Activated CD4-positive, alpha-beta memory T cell treated with anti-CD3 and anti-CD28 coated beads, Interleukin-2, amount 10 ng/mL, durations not matched to agents 7 days and 5 days (primary cell): ENCODE measurements at regions of chr10 and their contacts with region 1.

Region 1: DNA sequence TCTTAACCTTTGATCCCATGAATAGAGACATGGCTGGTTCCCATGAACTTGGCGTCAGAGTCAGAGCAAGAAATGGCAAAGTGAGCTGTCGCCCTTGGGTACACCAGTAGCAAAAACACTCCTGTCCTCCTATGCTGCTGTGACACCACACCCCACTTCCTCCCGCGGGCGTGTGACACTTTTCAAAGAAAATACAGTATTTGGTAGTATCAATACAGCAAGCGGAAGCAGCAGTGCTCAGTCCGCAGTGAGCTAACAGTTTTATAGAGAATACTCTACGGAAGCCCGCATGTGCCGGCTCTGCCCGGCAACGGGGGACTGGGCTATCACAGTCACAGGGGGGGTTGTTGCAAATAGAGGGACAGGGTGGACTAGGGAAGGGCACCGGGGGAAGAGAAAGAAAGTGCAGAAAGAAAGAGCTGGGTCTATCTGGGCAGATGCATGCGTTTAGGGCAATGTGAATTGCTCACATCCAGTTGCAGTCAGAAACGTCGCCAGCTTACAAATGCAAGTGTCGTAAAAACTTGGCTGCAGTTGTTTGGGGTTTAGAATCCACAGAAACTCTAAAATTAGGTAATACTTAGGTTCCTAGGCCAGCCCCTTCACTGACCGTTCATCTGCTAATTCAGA is 49.8 kb downstream of the PRKCQ start:
- DNase-seq: peak; percentile 91
- H3K4me3 Mint-ChIP-seq: peak overlapping the region; percentile 78
- H3K27ac Mint-ChIP-seq: peak overlapping the region; percentile 99
- H3K4me1 Mint-ChIP-seq: peaks cover 84% of the 10 kb centered on the region
- H3K27me3 Mint-ChIP-seq: no peaks in the 10 kb centered on the region

Region 2: GRCh38 chr10:6487920-6488319 is 42.4 kb before region 1 on chr10:
- CTCF ChIA-PET with region 1: no interaction called
- POLR2A ChIA-PET with region 1: interaction called, 67 read pairs
- DNase-seq: no peak
- H3K4me3 Mint-ChIP-seq: no peak overlapping the region
- H3K27ac Mint-ChIP-seq: no peak overlapping the region
- H3K4me1 Mint-ChIP-seq: peaks cover 74% of the 10 kb centered on the region
- H3K27me3 Mint-ChIP-seq: no peaks in the 10 kb centered on the region

Region 3: DNA sequence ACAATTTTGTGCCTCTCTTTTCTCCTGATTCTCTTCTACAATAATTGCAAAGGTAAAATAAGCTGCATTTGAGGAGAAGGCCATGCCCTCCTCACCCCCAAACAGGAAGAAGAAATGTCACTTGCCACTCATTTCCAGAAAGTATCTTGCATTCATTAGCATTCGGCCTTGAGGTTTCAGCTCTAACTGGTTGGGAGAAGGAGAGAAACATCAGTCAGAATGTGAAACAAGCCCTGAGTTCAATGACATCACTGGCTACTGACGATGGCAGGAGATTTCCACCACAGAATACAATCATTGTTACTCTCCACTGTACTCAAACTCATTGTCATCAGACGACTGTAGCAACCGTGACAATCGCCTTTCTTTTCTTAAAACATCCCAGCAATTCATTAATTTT is 23.0 kb before region 1 on chr10:
- CTCF ChIA-PET with region 1: interaction called, 7 read pairs
- POLR2A ChIA-PET with region 1: interaction called, 30 read pairs
- DNase-seq: peak; percentile 58
- H3K4me3 Mint-ChIP-seq: peak overlapping the region; percentile 40
- H3K27ac Mint-ChIP-seq: peak overlapping the region; percentile 88
- H3K4me1 Mint-ChIP-seq: peaks cover 72% of the 10 kb centered on the region
- H3K27me3 Mint-ChIP-seq: no peaks in the 10 kb centered on the region

Region 4: GRCh38 chr10:6542999-6543430 is 12.7 kb after region 1 on chr10:
- CTCF ChIA-PET with region 1: interaction called, 40 read pairs
- POLR2A ChIA-PET with region 1: interaction called, 186 read pairs
- DNase-seq: peak; percentile 66
- H3K4me3 Mint-ChIP-seq: peak overlapping the region; percentile 86
- H3K27ac Mint-ChIP-seq: peak overlapping the region; percentile 100
- H3K4me1 Mint-ChIP-seq: peaks cover 73% of the 10 kb centered on the region
- H3K27me3 Mint-ChIP-seq: no peaks in the 10 kb centered on the region